ENCODE measurements at regions of chr3 and their contacts with region 1.

Region 1: DNA sequence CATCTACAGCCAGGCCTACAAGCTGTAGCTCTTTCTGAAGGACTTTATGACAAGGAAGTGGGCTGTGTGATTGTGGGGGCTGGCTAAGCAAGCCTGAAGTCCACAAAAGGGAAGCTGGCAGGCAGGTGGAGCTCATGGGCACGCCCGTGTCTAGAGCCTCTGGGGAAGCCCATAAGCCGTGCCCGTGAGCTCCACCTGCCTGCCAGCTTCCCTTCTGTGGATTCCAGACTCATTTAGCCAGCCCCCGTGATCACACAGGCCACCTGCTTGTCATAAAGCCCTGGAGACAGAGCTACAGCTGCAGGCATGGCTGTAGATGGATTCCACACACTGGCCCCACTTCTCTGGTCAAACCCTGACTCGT is 15.2 kb downstream of the EFCC1 start:
- DNase-seq: peak; percentile 89 to 97 (median 95)
- H3K4me3 ChIP-seq: peak overlapping the region in 5 of 7 experiments; percentile 13 to 59 (median 48)
- H3K27ac ChIP-seq: peak overlapping the region; percentile 27 to 75
- H3K4me1 ChIP-seq: peaks cover 8 to 54% (median 52%) of the 10 kb centered on the region in 4 experiments
- H3K27me3 ChIP-seq: no peaks in the 10 kb centered on the region

Region 2: DNA sequence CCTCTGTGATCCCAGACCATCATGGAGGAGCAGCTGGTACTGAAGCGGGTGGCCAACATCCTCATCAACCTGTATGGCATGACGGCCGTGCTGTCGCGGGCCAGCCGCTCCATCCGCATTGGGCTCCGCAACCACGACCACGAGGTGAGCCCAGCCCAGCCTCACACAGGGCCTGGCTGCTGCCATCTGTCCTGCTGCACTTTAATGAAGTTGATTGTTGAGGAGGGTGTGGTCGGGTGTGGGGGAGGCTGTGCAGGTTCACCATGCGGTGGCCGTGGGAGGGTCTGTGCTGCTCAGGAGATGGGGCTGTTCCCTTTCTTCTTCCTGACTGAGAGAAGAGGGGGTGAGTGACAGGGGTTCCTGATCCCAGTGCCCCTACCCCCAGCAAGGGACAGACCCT is 106.3 kb before region 1 on chr3:
- CTCF ChIA-PET with region 1: no interaction called
- POLR2A ChIA-PET with region 1: no interaction called
- DNase-seq: no peak
- H3K4me3 ChIP-seq: no peak overlapping the region
- H3K27ac ChIP-seq: no peak overlapping the region
- H3K4me1 ChIP-seq: no peaks in the 10 kb centered on the region
- H3K27me3 ChIP-seq: no peaks in the 10 kb centered on the region

Region 3: GRCh38 chr3:128993461-128994173 is 22.7 kb before region 1 on chr3 and contains the start of gene CFAP92:
- CTCF ChIA-PET with region 1: interaction called, 195 read pairs
- POLR2A ChIA-PET with region 1: interaction called, 4 read pairs
- DNase-seq: peak; percentile 78 to 91 (median 90)
- H3K4me3 ChIP-seq: peak within 1 kb of the TSS in 5 of 7 experiments; percentile 31 to 76 (median 55)
- H3K27ac ChIP-seq: no peak within 1 kb of the TSS
- H3K4me1 ChIP-seq: peaks cover 15 to 54% (median 43%) of the 10 kb centered on the region in 4 experiments
- H3K27me3 ChIP-seq: no peaks in the 10 kb centered on the region

Region 4: DNA sequence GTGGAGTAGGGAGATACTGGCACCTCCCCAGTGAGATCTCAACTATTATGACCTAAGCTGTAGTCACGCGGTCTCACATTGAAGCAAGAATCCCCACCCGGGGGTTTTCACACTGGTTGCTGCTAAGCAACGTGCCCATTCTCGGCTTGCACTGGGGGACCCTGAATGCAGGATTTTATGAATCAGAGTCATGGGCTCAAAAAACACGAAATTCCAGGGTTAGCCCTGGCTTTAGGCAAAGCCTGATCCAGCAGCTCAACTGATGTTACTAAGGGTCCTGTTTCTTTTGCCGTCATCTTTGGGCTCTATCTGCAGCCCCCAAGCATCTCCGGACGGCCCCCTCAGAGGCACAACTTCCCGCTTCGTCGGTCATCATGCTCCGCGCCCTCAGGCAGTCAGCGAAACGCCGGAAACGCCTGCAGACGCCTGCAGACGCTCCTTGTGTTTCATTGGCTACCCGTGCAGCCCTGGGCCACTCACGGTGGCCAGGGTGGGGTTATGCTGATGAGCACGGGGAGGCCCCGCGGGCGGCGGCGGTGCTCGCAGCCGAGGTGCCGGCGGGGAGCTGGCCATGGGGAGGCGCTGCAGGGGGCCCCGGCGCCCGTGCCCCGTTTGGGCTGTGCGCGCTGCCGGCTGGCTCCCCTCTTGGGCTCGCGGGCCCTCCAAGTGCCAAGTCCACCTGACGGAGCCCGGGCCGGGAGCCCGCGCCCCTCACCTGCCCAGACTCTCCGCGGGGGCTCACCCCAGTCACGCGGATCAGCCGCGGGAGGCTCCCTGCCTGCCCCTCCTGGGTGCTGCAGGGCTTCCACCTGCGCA is 10.6 kb after region 1 on chr3:
- CTCF ChIA-PET with region 1: interaction called, 42 read pairs
- POLR2A ChIA-PET with region 1: interaction called, 5 read pairs
- DNase-seq: peak; percentile 93 to 98 (median 97)
- H3K4me3 ChIP-seq: peak overlapping the region; percentile 35 to 76 (median 55)
- H3K27ac ChIP-seq: peak overlapping the region in 1 of 2 experiments; percentile 49
- H3K4me1 ChIP-seq: peaks cover 0 to 30% (median 22%) of the 10 kb centered on the region in 4 experiments
- H3K27me3 ChIP-seq: no peaks in the 10 kb centered on the region

Region 5: DNA sequence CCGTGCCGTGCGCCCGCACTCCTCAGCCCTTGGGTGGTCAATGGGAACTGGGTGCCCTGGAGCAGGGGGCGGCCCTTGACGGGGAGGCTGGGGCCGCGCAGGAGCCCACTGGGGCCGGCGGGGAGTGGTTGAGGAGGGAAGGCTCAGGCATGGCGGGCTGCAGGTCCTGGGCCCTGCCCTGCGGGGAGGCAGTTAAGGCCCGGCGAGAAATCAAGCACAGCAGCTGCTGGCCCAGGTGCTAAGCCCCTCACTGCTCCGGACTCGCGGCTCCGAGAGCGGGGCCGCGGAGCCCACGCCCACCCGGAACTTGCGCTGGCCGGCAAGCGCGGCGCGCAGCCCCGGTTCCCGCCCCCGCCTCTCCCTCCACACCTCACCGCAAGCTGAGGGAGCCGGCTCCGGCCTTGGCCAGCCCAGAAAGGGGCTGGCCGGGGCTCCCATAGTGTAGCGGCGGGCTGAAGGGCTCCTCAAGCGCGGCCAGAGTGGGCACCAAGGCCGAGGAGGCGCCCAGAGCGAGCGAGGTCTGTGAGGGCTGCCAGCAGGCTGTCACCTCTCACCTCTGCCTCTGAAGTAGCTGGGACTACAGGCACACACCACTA is 52.1 kb after region 1 on chr3:
- CTCF ChIA-PET with region 1: interaction called, 11 read pairs
- POLR2A ChIA-PET with region 1: no interaction called
- DNase-seq: peak in 2 of 3 donors; percentile 46 to 66
- H3K4me3 ChIP-seq: peak overlapping the region in 5 of 7 experiments; percentile 8 to 71 (median 58)
- H3K27ac ChIP-seq: no peak overlapping the region
- H3K4me1 ChIP-seq: peaks cover 8 to 31% (median 20%) of the 10 kb centered on the region in 4 experiments
- H3K27me3 ChIP-seq: no peaks in the 10 kb centered on the region

Region 6: GRCh38 chr3:129768728-129769127 is 752.4 kb after region 1 on chr3:
- CTCF ChIA-PET with region 1: no interaction called
- POLR2A ChIA-PET with region 1: no interaction called
- DNase-seq: no peak
- H3K4me3 ChIP-seq: no peak overlapping the region
- H3K27ac ChIP-seq: no peak overlapping the region
- H3K4me1 ChIP-seq: no peaks in the 10 kb centered on the region
- H3K27me3 ChIP-seq: no peaks in the 10 kb centered on the region

Measured in common myeloid progenitor, CD34-positive (primary cell).